CD8-positive, alpha-beta T cell (primary cell): ENCODE measurements at regions of chr14 and their contacts with region 1.

Region 1: GRCh38 chr14:104865644-104866441 is 775 bp downstream of the CEP170B start:
- DNase-seq: peak in 3 of 9 experiments; percentile 28 to 37 (median 36)
- ATAC-seq: peak; percentile 47
- H3K4me3 ChIP-seq: peak overlapping the region; percentile 28 to 35
- H3K4me3 Mint-ChIP-seq: peak overlapping the region; percentile 65
- H3K27ac ChIP-seq: no peak overlapping the region
- H3K27ac Mint-ChIP-seq: no peak overlapping the region
- H3K4me1 ChIP-seq: peaks cover 16% of the 10 kb centered on the region
- H3K4me1 Mint-ChIP-seq: peaks cover 4% of the 10 kb centered on the region
- H3K27me3 ChIP-seq: peaks cover 8 to 21% of the 10 kb centered on the region in 2 experiments
- H3K27me3 Mint-ChIP-seq: peaks cover 13% of the 10 kb centered on the region
- CTCF ChIP-seq: no peak

Region 2: DNA sequence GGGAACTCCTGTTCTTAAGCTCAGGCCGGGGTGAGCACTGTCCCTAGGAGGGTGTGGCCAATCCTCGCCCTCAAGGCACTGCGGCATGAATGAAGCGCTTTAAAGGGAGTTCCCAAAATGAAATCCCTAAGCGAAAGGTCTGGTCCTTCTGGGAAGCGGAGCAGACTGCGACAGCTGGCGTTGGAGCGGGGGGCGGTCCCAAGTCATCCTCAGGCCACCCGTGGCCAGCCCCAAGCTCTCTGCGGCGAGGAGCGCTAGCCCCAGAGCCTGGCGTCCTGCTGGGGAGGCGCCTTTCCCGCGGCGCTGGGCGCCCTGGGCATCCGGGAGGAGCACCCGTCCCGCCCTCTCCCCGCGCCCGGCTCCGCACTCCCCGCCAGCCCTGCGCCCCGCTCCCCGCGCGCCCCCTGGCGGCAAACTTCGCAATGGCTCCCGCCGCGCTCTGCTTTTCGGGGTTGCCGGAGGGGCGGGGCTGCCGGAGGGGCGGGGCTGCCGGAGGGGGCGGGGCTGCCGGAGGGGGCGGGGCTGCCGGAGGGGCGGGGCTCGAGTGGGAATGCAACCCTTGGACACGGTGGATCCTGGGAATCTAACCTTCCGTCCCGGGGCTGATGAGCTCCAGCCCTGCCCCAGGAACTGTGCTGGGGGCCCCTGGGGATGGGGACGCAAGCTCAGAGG is 39.5 kb before region 1 on chr14:
- CTCF ChIA-PET with region 1: no interaction called
- POLR2A ChIA-PET with region 1: no interaction called
- intact Hi-C with region 1: loop called in 1 of 2 experiments (anchors 2 kb)
- DNase-seq: peak; percentile 88 to 98 (median 95)
- ATAC-seq: peak; percentile 91
- H3K4me3 ChIP-seq: peak overlapping the region; percentile 66 to 67
- H3K4me3 Mint-ChIP-seq: peak overlapping the region; percentile 80
- H3K27ac ChIP-seq: no peak overlapping the region
- H3K27ac Mint-ChIP-seq: no peak overlapping the region
- H3K4me1 ChIP-seq: peaks cover 20% of the 10 kb centered on the region
- H3K4me1 Mint-ChIP-seq: peaks cover 25% of the 10 kb centered on the region
- H3K27me3 ChIP-seq: peaks cover 0 to 5% of the 10 kb centered on the region in 2 experiments
- H3K27me3 Mint-ChIP-seq: no peaks in the 10 kb centered on the region
- CTCF ChIP-seq: peak; percentile 79